AG04449 (cell line): ENCODE measurements at regions of chr15 and their contacts with region 1.

Region 1: GRCh38 chr15:65400760-65401610 is 21.8 kb downstream of the IGDCC4 start:
- DNase-seq: no peak
- H3K4me3 ChIP-seq: no peak overlapping the region
- CTCF ChIP-seq: peak; percentile 92

Region 2: DNA sequence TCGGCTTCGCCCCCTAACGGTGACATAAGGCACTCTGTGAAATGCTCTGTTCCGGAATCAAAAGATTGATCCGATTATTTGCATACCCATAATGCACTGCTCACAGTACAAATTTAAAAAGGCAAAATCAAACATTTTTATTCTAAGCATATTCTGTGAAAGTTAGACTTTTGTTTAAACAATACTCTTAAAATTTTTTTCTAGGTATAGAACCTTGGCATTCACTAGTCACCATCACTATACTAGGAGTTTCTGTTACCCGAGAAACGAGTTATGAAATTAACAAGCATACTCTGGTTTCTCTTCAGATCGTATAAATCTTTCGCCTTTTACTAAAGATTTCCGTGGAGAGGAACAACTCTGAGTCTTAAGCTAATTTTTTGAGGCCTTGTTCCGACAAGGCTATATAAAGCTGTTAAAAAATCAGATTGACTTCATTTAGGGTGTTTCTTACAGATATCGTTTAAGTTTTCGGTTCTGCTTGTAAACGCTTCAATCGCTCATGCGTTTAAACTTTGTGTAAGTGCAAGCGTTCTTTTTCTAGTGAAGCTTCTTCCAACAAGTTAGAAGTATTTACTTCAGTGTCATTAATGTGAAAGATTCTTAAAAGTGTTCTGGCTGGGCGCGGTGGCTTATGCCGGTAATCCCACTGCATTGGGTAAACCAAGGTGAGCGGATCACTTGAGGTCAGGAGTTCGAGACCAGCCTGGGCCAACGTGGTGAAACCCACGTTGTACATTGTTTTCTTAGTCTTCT is 96.4 kb before region 1 on chr15 and contains the start of gene RNU5B-1:
- CTCF ChIA-PET with region 1: interaction called, 10 read pairs
- POLR2A ChIA-PET with region 1: interaction called, 4 read pairs
- DNase-seq: peak; percentile 96
- H3K4me3 ChIP-seq: peak within 1 kb of the TSS; percentile 56
- CTCF ChIP-seq: peak; percentile 85

Region 3: DNA sequence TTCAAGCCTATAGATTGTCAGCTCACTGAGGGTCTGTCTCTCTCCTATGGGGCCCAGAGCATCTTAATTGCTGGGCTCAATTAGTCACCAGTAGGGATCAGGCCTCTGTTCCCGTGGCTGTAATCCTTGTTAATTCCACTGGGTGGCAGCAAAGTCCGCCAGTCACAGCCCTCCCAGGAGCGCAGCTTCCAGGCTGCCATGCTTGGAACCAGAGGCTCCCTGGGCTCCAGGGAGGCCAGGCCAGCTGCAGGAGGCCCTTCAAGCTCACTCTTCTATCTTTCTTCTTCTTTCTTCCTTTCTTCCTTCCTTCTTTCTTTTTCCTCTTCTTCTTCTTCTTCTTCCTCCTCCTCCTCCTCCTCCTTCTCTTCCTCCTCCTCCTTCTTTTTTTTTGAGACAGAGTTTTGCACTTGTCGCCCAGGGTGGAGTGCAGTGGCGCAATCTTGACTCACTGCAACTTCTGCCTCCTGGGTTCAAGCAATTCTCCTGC is 82.1 kb before region 1 on chr15:
- CTCF ChIA-PET with region 1: interaction called, 652 read pairs
- POLR2A ChIA-PET with region 1: no interaction called
- DNase-seq: no peak
- H3K4me3 ChIP-seq: no peak overlapping the region
- CTCF ChIP-seq: peak; percentile 79

Region 4: DNA sequence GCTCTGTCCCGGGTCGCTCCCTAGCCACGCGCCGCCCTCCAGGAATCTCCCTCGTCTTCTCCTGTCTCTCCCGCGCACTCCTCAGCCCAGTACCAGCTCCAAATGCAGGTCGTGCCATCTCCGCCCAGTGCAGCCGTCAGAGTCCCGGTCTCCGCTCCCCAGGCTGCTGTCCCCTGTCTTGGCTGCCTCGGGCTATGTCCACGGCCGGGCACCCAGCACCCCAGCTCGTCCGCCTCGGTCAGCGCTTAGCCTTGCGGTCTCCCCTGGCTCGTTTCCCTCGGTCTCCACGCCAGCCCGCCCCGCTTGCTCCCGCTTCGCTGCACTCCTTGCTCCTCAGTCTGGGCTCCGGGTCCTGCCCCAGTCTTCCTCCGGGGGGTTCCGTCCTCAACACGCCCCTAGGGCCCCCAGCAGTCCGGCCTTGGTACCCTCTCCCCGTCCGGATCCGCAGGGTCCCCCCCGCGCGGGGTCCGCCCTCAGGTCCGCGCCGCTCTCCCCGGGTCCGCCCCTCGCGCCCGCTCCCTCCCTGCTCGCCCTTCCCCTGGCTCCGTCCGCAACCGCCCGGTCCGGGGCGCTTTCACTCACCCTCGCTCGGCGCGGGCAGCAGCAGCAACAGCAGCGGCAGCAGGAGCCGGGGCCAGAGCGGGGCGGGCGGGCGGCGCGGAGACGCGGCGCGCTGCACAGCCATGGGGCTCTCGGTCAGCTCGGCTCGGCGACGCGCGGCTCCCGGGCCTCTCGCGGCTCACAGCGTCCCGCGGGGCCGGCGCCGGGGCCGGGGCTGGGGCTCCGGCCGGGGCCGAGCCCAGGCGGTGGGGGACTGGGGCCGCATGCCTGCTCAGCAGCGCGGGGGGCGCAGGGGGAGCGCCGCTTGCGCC is 23.6 kb before region 1 on chr15:
- CTCF ChIA-PET with region 1: interaction called, 267 read pairs
- POLR2A ChIA-PET with region 1: no interaction called
- DNase-seq: no peak
- H3K4me3 ChIP-seq: peak overlapping the region; percentile 56
- CTCF ChIP-seq: no peak

Region 5: GRCh38 chr15:65414841-65415621 is 14.0 kb after region 1 on chr15:
- CTCF ChIA-PET with region 1: interaction called, 267 read pairs
- POLR2A ChIA-PET with region 1: no interaction called
- DNase-seq: peak; percentile 28
- H3K4me3 ChIP-seq: no peak overlapping the region
- CTCF ChIP-seq: no peak

Region 6: DNA sequence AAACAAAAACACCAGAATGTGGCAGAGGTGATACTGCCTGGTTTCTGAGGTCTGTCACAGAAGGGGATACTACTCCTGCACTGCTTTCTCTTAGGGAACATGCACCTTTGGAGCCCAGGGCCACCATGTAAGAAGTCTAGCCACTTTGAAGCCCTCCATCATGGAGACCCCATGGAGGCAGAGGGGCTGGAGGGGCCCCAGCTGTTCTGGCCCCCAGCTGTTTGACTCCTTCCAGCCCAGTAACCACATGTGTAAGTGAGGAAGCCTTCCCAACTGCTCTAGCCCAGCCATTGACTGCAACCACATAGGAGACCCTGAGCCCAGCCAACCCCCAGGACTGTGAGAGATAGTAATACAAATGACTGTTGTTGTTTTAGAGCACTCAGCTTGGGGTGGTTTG is 30.7 kb after region 1 on chr15:
- CTCF ChIA-PET with region 1: interaction called, 108 read pairs
- POLR2A ChIA-PET with region 1: interaction called, 3 read pairs
- DNase-seq: no peak
- H3K4me3 ChIP-seq: no peak overlapping the region
- CTCF ChIP-seq: no peak

Region 7: GRCh38 chr15:65466901-65467300 is 65.9 kb after region 1 on chr15:
- CTCF ChIA-PET with region 1: interaction called, 14 read pairs
- POLR2A ChIA-PET with region 1: no interaction called
- DNase-seq: no peak
- H3K4me3 ChIP-seq: no peak overlapping the region
- CTCF ChIP-seq: no peak